PC-3 (cell line): ENCODE measurements at regions of chr6 and their contacts with region 1.

Region 1: DNA sequence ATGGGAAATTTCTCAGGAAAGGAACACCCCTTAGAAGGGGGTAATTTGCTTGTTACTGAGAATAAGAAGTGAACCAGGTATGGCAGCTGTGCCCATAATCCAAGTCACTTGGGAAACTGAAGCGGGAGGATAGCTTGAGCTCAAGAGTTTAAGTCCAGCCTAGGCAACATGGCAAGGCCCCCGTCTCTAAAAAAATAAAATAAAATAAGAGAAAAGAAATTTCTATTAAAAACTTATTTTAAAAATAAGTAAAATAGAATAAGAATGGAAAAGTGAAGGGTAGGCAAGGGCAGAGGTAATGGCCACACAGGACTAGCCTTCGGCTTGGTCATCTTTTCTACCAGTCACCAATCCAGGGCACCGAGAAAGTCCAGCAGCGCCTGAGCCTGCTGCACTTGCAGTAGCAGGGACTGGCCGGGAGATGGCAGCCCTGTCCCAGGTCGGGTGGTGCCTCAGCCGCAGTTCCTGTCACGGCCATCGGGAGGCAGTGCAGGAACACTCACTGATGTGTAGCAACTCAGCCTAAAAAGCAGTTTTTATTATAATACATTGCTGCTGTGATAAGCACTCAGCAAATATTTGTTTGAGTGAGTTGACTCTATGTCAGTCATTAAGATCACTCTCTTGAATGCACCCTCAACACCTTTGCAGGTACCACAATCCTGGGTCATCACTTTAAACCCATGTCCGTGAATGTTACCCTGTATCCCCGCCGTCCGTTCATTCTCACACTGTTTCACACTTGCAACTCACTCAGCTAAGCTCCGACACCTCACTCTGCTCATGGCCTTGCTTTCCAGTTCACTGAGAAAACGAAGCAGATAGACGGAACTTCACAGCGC is 23.2 kb upstream of the GCM1 start:
- DNase-seq: peak; percentile 89
- ATAC-seq: peak; percentile 70
- H3K4me3 ChIP-seq: no peak overlapping the region
- H3K27ac ChIP-seq: no peak overlapping the region
- H3K4me1 ChIP-seq: peaks cover 16% of the 10 kb centered on the region
- H3K27me3 ChIP-seq: no peaks in the 10 kb centered on the region
- CTCF ChIP-seq: peak; percentile 100

Region 2: DNA sequence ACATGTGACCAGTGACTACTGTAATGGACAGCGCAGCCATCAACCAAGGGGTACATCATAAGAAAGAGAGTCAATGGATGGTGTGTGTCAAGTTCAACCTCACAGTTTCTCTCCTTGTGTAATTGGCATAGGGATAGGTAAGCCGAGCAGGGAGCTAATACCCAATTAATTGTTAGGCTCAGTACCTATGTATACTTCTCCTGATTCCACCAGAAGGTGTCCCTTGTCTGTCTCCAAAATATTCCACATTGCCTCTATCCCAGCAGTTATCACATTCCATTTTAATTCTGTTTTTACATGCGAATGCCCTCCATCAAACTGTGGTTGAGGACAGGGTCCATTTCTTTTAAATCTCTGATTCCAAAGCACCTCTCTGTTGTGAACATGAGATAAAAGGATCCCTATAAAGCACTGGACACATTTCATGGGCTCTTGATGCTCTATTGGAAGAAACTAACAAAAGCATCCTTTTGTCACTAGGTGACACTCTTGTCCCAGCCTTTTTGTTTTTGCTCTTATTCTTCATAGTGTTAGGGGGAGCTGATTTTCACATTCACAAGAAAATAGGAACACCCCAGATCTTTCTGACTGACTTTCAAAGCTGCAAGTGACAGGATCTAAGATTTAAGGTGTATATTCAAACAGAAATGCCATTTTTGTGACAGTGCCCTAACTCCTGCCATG is 67.7 kb before region 1 on chr6:
- CTCF ChIA-PET with region 1: interaction called, 8 read pairs
- POLR2A ChIA-PET with region 1: no interaction called
- intact Hi-C with region 1: loop called (anchors 2 kb)
- DNase-seq: peak; percentile 58
- ATAC-seq: peak; percentile 80
- H3K4me3 ChIP-seq: no peak overlapping the region
- H3K27ac ChIP-seq: no peak overlapping the region
- H3K4me1 ChIP-seq: peaks cover 7% of the 10 kb centered on the region; the same call in 1 of the 2 replicates
- H3K27me3 ChIP-seq: no peaks in the 10 kb centered on the region
- CTCF ChIP-seq: peak; percentile 84

Region 3: GRCh38 chr6:53250176-53251032 is 78.6 kb after region 1 on chr6:
- CTCF ChIA-PET with region 1: no interaction called
- POLR2A ChIA-PET with region 1: no interaction called
- intact Hi-C with region 1: loop called (anchors 10 kb)
- DNase-seq: peak; percentile 81
- ATAC-seq: peak; percentile 90
- H3K4me3 ChIP-seq: no peak overlapping the region
- H3K27ac ChIP-seq: peak overlapping the region; percentile 63
- H3K4me1 ChIP-seq: peaks cover 20% of the 10 kb centered on the region
- H3K27me3 ChIP-seq: no peaks in the 10 kb centered on the region
- CTCF ChIP-seq: no peak

Region 4: GRCh38 chr6:53348371-53349208 is 176.8 kb after region 1 on chr6 and contains the start of gene ELOVL5:
- CTCF ChIA-PET with region 1: no interaction called
- POLR2A ChIA-PET with region 1: no interaction called
- intact Hi-C with region 1: loop called (anchors 5 kb)
- DNase-seq: peak; percentile 91
- ATAC-seq: peak; percentile 65
- H3K4me3 ChIP-seq: peak within 1 kb of the TSS; percentile 96
- H3K27ac ChIP-seq: peak within 1 kb of the TSS; percentile 61
- H3K4me1 ChIP-seq: peaks cover 12% of the 10 kb centered on the region
- H3K27me3 ChIP-seq: no peaks in the 10 kb centered on the region
- CTCF ChIP-seq: no peak
- total RNA-seq, gene ELOVL5: 57.2 and 62.7 TPM in 2 replicates

Region 5: DNA sequence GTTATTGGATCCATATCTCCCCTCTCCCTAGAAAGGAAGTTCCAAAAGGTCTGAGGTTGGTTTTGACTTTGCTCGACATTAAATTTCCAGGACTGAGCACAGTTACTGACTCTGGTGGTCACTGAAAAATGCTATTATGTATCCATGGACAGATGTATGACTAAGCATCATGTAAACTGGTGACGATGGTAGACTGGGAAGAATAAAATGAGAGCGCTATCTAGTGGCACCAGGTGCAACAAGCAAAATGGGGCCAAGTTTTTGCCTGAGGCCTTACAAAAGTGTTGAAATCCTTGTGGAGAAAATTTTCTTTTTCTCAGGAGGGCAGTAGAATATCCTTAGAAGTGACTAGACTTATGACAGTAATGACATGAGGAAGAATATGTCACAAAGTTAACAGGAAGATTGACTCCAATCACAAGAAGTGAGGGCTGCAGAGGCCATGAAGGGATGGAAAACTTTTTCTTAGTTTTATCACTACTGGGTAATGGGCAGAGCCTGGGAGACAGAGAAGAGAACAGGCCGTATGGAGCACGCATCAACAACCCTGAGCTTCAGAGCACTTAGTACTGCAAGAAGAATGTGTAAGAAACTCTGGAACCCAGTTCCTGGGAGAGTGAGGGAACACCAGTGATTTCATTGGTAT is 265.9 kb after region 1 on chr6:
- CTCF ChIA-PET with region 1: no interaction called
- POLR2A ChIA-PET with region 1: no interaction called
- intact Hi-C with region 1: loop called (anchors 1 kb)
- DNase-seq: peak; percentile 90
- ATAC-seq: peak; percentile 79
- H3K4me3 ChIP-seq: no peak overlapping the region
- H3K27ac ChIP-seq: no peak overlapping the region
- H3K4me1 ChIP-seq: peaks cover 20% of the 10 kb centered on the region
- H3K27me3 ChIP-seq: no peaks in the 10 kb centered on the region
- CTCF ChIP-seq: peak; percentile 94

Region 6: DNA sequence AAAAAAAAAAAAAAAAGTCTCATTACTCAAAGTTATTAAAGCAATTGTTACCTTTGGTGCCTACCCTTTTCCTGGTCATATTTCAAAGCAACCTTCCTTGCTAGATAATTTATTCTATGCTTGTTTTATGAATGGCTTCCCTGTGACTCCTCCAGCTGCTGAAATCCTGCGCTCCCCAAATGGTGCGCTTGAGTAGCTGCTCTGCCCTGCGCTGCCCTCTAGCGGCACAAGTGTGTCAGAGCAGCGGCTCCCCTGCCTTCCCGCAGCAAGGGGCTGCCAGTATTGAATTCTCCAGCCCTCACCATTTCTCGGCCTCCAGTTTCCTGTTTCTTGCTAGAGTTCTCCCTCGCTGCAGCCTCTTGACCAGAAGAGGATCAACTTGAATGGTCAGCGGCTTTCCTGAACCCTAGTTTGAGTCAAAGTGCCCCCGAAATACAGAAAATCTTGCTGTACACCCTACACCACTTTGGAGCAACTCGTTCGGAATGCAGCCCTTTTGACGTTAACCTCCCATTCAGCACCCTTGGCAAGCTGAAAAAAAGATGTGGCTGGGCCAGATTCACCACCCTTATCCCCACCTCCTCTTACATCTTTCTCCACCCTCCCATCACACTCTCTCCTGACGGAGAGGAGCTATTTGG is 554.1 kb after region 1 on chr6:
- CTCF ChIA-PET with region 1: no interaction called
- POLR2A ChIA-PET with region 1: no interaction called
- intact Hi-C with region 1: loop called (anchors 10 kb)
- DNase-seq: peak; percentile 83
- ATAC-seq: peak; percentile 83
- H3K4me3 ChIP-seq: no peak overlapping the region
- H3K27ac ChIP-seq: no peak overlapping the region
- H3K4me1 ChIP-seq: peaks cover 17% of the 10 kb centered on the region
- H3K27me3 ChIP-seq: no peaks in the 10 kb centered on the region
- CTCF ChIP-seq: peak; percentile 95